Ascending aorta (tissue), 2 donors: ENCODE measurements at regions of chr3 and their contacts with region 1.

Region 1: GRCh38 chr3:4978204-4978965 is 852 bp upstream of the BHLHE40 start:
- DNase-seq: peak; percentile 95 to 99
- H3K4me3 ChIP-seq: peak overlapping the region; percentile 79 to 94
- H3K27ac ChIP-seq: peak overlapping the region; percentile 97 to 99
- H3K4me1 ChIP-seq: peaks cover 5 to 34% of the 10 kb centered on the region in 2 donors
- H3K27me3 ChIP-seq: no peaks in the 10 kb centered on the region
- CTCF ChIP-seq: no peak

Region 2: GRCh38 chr3:4350789-4351163 is 627.6 kb before region 1 on chr3:
- intact Hi-C with region 1: loop called (anchors 5 kb)
- DNase-seq: peak in 1 of 2 donors; percentile 68
- H3K4me3 ChIP-seq: peak overlapping the region; percentile 45 to 60
- H3K27ac ChIP-seq: peak overlapping the region; percentile 88 to 92
- H3K4me1 ChIP-seq: peaks cover 0 to 3% of the 10 kb centered on the region in 2 donors
- H3K27me3 ChIP-seq: no peaks in the 10 kb centered on the region
- CTCF ChIP-seq: peak; percentile 58 to 76 (median 67)

Region 3: GRCh38 chr3:4597204-4597985 is 381.0 kb before region 1 on chr3:
- intact Hi-C with region 1: no loop called
- DNase-seq: no peak
- H3K4me3 ChIP-seq: no peak overlapping the region
- H3K27ac ChIP-seq: no peak overlapping the region
- H3K4me1 ChIP-seq: peaks cover 0 to 8% of the 10 kb centered on the region in 2 donors
- H3K27me3 ChIP-seq: no peaks in the 10 kb centered on the region
- CTCF ChIP-seq: no peak

Region 4: DNA sequence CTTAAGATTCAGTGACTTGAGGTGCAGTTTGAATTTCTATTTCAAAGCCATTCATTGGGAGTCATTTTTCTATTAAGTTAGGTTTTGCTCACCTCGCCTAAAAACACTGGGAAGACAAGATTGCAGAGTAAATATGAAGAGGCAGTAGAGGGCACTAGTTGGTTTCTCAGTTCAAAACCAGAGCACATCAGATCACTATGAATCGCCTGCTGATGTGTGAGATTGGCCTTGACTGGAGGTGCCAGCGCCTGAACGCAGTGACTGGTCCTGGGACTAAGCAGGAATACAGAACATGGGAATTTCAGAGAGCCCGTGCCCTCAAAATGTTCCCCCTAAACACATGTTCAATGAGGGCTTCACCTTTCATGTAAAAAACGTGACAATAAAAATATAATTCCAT is 256.3 kb before region 1 on chr3:
- intact Hi-C with region 1: loop called (anchors 2 kb)
- DNase-seq: no peak
- H3K4me3 ChIP-seq: no peak overlapping the region
- H3K27ac ChIP-seq: peak overlapping the region; percentile 28 to 60
- H3K4me1 ChIP-seq: peaks cover 0 to 19% of the 10 kb centered on the region in 2 donors
- H3K27me3 ChIP-seq: no peaks in the 10 kb centered on the region
- CTCF ChIP-seq: peak in 2 of 3 experiments; percentile 13 to 43

Region 5: GRCh38 chr3:4826237-4827100 is 151.9 kb before region 1 on chr3:
- intact Hi-C with region 1: loop called (anchors 2 kb)
- DNase-seq: peak; percentile 68 to 91
- H3K4me3 ChIP-seq: no peak overlapping the region
- H3K27ac ChIP-seq: peak overlapping the region; percentile 74 to 81
- H3K4me1 ChIP-seq: peaks cover 8 to 35% of the 10 kb centered on the region in 2 donors
- H3K27me3 ChIP-seq: no peaks in the 10 kb centered on the region
- CTCF ChIP-seq: no peak

Region 6: DNA sequence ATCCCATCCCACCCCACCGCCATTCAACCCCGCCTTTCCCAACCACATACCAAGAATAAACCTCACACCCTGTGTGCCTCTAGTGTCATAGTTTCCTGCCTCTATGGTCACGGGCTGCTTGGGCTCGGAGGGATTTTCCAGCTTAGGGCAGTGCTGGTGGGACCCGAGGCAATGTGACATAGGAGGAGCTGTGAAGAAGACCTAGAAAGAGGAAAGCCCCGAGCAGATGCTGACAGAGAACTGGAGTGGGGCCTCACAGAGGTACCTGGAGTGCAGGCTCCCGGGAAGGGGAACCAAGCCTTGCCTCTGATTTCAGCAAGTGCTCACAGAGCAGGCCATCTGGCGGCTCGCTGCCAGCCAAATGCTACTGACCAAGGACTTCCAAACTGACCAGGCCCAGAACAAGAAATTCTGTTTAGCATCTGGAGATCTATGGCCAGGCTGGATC is 28.4 kb after region 1 on chr3:
- intact Hi-C with region 1: no loop called
- DNase-seq: no peak
- H3K4me3 ChIP-seq: no peak overlapping the region
- H3K27ac ChIP-seq: no peak overlapping the region
- H3K4me1 ChIP-seq: no peaks in the 10 kb centered on the region
- H3K27me3 ChIP-seq: no peaks in the 10 kb centered on the region
- CTCF ChIP-seq: no peak

Region 7: DNA sequence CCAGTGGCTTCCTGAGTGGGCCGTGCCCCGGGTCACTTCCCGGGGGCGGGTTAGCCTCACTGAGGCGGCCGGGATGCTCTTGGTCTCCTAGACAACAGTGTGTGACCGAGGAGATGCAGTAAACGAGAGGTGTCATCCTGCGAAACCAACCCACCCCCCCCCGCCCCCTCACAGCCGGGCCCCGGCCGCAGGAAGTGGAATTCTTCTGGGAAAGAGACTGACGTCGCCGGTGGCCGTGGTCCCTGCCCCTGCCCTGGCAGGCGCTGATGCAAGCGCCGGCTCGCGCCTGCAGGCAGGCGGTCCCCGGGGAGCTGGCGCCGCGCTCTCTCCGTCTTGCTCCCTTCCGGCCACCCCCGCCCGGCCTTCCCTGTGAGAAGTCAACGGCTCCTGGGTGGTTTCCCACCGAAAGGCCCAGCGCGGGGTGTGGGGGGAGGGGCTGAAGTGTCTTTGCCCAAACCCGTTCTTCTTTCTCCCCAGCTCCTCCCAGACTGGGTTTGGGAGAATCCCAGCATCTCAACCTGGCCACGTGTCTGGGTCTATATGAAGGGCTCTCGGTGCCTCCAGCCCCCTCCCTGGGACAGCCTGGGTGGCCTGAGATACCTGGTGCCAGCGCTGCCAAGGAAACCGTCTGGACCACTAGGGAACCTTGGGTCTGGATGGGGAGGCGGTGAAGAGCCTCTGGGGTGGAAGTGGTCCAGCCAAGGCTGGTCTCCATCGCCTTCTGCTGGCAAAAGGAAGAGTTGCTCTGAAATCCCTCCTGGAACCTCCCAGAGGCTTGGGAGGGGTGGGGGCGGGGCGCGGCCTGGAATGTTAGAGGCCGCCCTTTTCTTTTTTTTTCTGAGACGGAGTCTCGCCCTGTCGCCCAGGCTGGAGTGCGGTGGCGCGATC is 48.2 kb after region 1 on chr3:
- intact Hi-C with region 1: loop called (anchors 1 kb)
- DNase-seq: peak; percentile 84 to 97
- H3K4me3 ChIP-seq: peak overlapping the region; percentile 60 to 62
- H3K27ac ChIP-seq: peak overlapping the region; percentile 88 to 94
- H3K4me1 ChIP-seq: peaks cover 0 to 21% of the 10 kb centered on the region in 2 donors
- H3K27me3 ChIP-seq: no peaks in the 10 kb centered on the region
- CTCF ChIP-seq: peak; percentile 76 to 81 (median 80)

Region 8: DNA sequence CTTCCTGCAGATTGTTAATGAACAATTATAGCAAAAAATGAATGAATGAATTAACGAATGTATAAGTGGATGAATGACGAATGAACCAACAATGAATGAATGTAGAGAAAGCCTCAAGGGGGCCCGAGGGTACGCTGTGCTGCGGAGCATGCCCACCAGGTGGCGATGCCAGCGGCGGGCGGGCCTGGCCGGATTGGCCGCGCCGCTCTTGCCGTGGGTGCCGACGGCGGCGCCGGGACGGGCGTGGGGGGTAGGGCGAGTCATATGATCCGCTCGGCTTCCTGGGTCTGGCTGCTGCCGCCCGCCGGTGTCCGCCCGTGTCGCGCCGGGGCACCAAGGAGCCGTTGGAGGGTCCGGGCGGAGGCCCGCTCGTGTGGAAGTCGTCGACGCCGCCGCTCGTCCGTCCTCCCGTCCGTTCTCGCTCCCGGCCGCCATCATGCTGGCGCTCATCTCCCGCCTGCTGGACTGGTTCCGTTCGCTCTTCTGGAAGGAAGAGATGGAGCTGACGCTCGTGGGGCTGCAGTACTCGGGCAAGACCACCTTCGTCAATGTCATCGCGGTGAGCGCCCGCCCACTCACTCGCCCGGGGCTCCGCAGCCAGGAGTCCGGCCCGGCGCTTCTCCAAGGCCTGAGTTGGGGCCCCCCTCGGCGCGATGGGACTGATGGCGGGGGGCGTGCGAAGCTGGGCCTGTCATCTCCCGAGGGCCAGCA is 143.8 kb after region 1 on chr3 and contains the start of gene ARL8B:
- intact Hi-C with region 1: loop called (anchors 5 kb)
- DNase-seq: peak; percentile 42 to 94
- H3K4me3 ChIP-seq: peak within 1 kb of the TSS; percentile 87 to 98
- H3K27ac ChIP-seq: peak within 1 kb of the TSS; percentile 92 to 93
- H3K4me1 ChIP-seq: peaks cover 0 to 25% of the 10 kb centered on the region in 2 donors
- H3K27me3 ChIP-seq: no peaks in the 10 kb centered on the region
- CTCF ChIP-seq: peak; percentile 94 to 96 (median 94)
- total RNA-seq, gene ARL8B: 6.4 TPM